ENCODE measurements at regions of chr19 and their contacts with region 1.

Region 1: GRCh38 chr19:29964171-29964570 is 22.1 kb downstream of the URI1 start:
- DNase-seq: no peak
- H3K4me3 ChIP-seq: no peak overlapping the region
- H3K27me3 ChIP-seq: no peaks in the 10 kb centered on the region
- CTCF ChIP-seq: no peak

Region 2: DNA sequence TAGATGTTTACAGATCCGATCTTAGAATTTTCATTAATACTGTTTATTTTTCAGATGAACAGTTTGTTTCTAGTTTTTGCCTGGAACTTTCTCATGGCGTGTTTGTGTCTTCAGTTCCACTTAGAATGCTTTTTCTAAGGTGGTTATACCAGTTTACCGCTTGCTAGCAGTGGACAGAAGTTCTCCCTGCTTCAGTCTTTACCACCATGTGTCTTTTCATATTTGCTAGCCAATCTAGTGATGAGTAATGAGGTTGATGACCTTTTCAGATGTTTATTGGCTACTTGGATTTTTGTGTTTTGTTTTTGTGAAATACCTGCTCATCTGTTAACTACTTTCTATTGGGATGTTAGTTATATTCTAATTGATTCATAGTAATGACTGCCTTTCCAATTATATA is 16.9 kb before region 1 on chr19:
- CTCF ChIA-PET with region 1: interaction called, 3 read pairs
- POLR2A ChIA-PET with region 1: interaction called, 14 read pairs
- DNase-seq: no peak
- H3K4me3 ChIP-seq: no peak overlapping the region
- H3K27me3 ChIP-seq: no peaks in the 10 kb centered on the region
- CTCF ChIP-seq: no peak

Measured in BJ (cell line).